MCF 10A (cell line): ENCODE measurements at regions of chr1 and their contacts with region 1.

Region 1: DNA sequence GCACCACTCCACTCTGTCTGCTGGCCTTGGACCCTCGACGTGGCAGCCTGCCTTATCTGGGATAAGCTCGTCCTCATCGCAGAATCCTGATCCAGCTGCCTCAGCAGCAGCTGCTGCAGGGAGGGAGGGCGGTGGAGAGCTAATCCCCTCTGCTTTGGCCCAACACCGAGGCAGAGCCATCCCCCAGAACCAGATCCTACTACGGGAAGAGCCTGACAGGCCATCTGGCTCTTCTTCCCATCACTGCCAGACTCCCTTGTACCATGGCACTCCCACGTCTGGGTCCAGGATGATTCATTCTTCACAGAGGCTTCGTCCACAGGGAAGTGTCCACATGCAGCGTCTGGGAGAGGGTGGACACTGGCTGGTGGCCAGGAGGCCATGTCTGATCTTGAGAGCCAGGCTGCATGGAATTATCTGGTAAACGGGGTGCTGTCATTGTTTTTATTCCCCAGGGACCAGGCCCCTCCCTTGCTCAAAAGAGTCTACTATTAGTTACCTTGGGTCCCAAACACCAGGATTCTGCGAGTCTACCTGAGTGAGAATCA is 14.6 kb upstream of the PKP1 start:
- DNase-seq: peak; percentile 99
- H3K4me3 Mint-ChIP-seq: no peak overlapping the region
- H3K27ac Mint-ChIP-seq: peak overlapping the region; percentile 89
- H3K4me1 Mint-ChIP-seq: peaks cover 48% of the 10 kb centered on the region
- H3K27me3 Mint-ChIP-seq: no peaks in the 10 kb centered on the region
- CTCF ChIP-seq: no peak

Region 2: DNA sequence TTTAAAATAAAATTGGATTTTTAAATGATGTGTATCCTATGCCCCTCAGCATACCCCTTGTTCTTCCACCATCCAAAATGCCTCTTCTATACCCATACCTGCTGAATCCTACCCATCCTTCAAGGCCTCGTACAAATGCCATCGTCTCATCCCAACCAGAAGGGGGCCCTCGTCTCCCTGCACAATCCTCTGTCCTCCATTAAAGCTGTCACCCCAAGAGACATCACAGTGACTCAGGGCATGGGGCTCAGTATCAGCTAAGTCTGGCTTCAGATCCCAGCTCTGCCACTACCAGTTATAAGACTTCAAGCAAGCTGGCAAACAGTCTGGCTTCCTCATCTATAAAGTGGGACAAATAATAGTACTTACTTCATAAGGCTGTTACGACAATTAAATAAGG is 54.2 kb before region 1 on chr1:
- CTCF ChIA-PET with region 1: no interaction called
- POLR2A ChIA-PET with region 1: no interaction called
- intact Hi-C with region 1: no loop called
- DNase-seq: peak; percentile 46
- H3K4me3 Mint-ChIP-seq: no peak overlapping the region
- H3K27ac Mint-ChIP-seq: no peak overlapping the region
- H3K4me1 Mint-ChIP-seq: no peaks in the 10 kb centered on the region
- H3K27me3 Mint-ChIP-seq: peaks cover 40% of the 10 kb centered on the region
- CTCF ChIP-seq: peak; percentile 16

Region 3: GRCh38 chr1:201282931-201283829 is 14.5 kb after region 1 on chr1 and contains the start of gene PKP1:
- CTCF ChIA-PET with region 1: interaction called, 415 read pairs
- POLR2A ChIA-PET with region 1: interaction called, 3,819 read pairs
- intact Hi-C with region 1: no loop called
- DNase-seq: no peak
- H3K4me3 Mint-ChIP-seq: no peak within 1 kb of the TSS
- H3K27ac Mint-ChIP-seq: peak within 1 kb of the TSS; percentile 40
- H3K4me1 Mint-ChIP-seq: peaks cover 22% of the 10 kb centered on the region
- H3K27me3 Mint-ChIP-seq: no peaks in the 10 kb centered on the region
- CTCF ChIP-seq: no peak
- total RNA-seq, gene PKP1: 0.30 and 0.32 TPM in 2 replicates

Region 4: GRCh38 chr1:201608635-201609395 is 340.1 kb after region 1 on chr1:
- CTCF ChIA-PET with region 1: no interaction called
- POLR2A ChIA-PET with region 1: no interaction called
- intact Hi-C with region 1: no loop called
- DNase-seq: no peak
- H3K4me3 Mint-ChIP-seq: no peak overlapping the region
- H3K27ac Mint-ChIP-seq: no peak overlapping the region
- H3K4me1 Mint-ChIP-seq: no peaks in the 10 kb centered on the region
- H3K27me3 Mint-ChIP-seq: no peaks in the 10 kb centered on the region
- CTCF ChIP-seq: no peak